K562 (cell line): ENCODE measurements at regions of chr10 and their contacts with region 1.

Region 1: GRCh38 chr10:124719213-124719851 is 24.8 kb downstream of the FAM53B start:
- DNase-seq: peak in 3 of 4 experiments; percentile 24 to 51 (median 48)
- ATAC-seq: peak; percentile 29; the same call in 2 of the 3 replicates
- H3K4me3 ChIP-seq: no peak overlapping the region
- H3K27ac ChIP-seq: no peak overlapping the region
- H3K4me1 ChIP-seq: peaks cover 35 to 48% of the 10 kb centered on the region in 2 experiments
- H3K27me3 ChIP-seq: no peaks in the 10 kb centered on the region
- CTCF ChIP-seq: peak; percentile 25 to 45 (median 41); a peak in 4 of 6 replicates
- EP300 ChIP-seq: no peak
- POLR2A ChIP-seq: no peak
- RAD21 ChIP-seq: peak; percentile 7 to 18; a peak in 1 of 4 replicates

Region 2: GRCh38 chr10:124588736-124589490 is 130.4 kb before region 1 on chr10:
- CTCF ChIA-PET with region 1: no interaction called
- POLR2A ChIA-PET with region 1: interaction called, 4 read pairs
- in situ Hi-C with region 1: no loop called
- intact Hi-C with region 1: loop called (anchors 2 kb)
- DNase-seq: peak; percentile 73 to 87 (median 78)
- ATAC-seq: peak; percentile 95
- H3K4me3 ChIP-seq: no peak overlapping the region
- H3K27ac ChIP-seq: peak overlapping the region; percentile 37; the same call in 2 of the 3 replicates
- H3K4me1 ChIP-seq: peaks cover 15 to 40% of the 10 kb centered on the region in 2 experiments
- H3K27me3 ChIP-seq: peaks cover 0 to 13% of the 10 kb centered on the region in 2 experiments; a peak in 3 of 5 replicates
- CTCF ChIP-seq: no peak
- EP300 ChIP-seq: peak; percentile 78
- POLR2A ChIP-seq: no peak
- RAD21 ChIP-seq: no peak

Region 3: GRCh38 chr10:124647421-124648130 is 71.8 kb before region 1 on chr10:
- CTCF ChIA-PET with region 1: no interaction called
- POLR2A ChIA-PET with region 1: interaction called, 3 read pairs
- in situ Hi-C with region 1: no loop called
- intact Hi-C with region 1: loop called (anchors 1 kb)
- DNase-seq: peak; percentile 60 to 76 (median 66)
- ATAC-seq: peak; percentile 88
- H3K4me3 ChIP-seq: no peak overlapping the region
- H3K27ac ChIP-seq: peak overlapping the region; percentile 82
- H3K4me1 ChIP-seq: peaks cover 35 to 60% of the 10 kb centered on the region in 2 experiments
- H3K27me3 ChIP-seq: no peaks in the 10 kb centered on the region
- CTCF ChIP-seq: peak; percentile 40 to 45 (median 41); a peak in 4 of 6 replicates
- EP300 ChIP-seq: no peak
- POLR2A ChIP-seq: no peak
- RAD21 ChIP-seq: peak in 1 of 2 experiments; percentile 37; a peak in 3 of 4 replicates

Region 4: DNA sequence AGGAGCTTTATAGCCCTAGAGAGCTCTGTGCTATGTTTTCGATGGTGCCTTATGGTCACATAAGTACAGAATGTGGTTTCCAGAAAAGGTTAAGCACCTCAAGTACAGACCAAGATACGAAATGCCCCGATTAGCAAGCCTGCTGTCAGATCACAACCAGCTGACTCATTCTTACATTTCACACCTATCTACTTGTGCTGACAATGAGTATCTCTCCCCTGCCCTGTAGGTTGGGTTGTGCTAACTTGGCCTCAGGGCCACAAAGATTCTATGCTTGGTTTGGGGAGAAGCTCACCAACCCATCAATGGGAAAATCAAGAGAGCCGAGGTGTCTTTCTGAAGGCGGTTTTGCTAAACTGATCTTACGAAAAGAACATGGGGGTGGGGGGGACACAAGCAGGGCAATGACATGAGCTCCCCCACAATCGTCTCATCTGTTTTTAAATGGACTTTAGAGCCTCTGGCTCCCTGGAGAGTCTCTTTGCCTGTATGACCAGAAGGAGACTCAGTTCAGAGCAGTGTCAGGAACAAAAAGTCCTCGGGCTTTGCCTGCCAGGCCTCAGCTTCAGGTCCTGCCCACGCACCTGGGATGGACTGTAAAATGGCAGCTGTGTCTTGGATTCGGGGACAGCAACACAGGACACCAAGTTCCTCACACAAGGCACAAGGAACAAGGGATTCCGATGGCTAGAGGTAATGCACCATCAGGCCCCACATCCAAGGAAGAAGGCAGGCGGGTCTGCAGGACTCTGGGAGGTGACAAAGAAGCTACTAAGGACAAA is 30.3 kb before region 1 on chr10:
- CTCF ChIA-PET with region 1: no interaction called
- POLR2A ChIA-PET with region 1: interaction called, 3 read pairs
- in situ Hi-C with region 1: no loop called
- intact Hi-C with region 1: loop called (anchors 1 kb)
- DNase-seq: peak; percentile 18 to 70 (median 34)
- ATAC-seq: peak; percentile 51
- H3K4me3 ChIP-seq: no peak overlapping the region
- H3K27ac ChIP-seq: peak overlapping the region; percentile 33; the same call in 2 of the 3 replicates
- H3K4me1 ChIP-seq: peaks cover 47 to 48% of the 10 kb centered on the region in 2 experiments
- H3K27me3 ChIP-seq: no peaks in the 10 kb centered on the region
- CTCF ChIP-seq: no peak
- EP300 ChIP-seq: peak; percentile 49; the same call in 1 of the 2 replicates
- POLR2A ChIP-seq: no peak
- RAD21 ChIP-seq: no peak

Region 5: GRCh38 chr10:124701435-124701834 is 17.9 kb before region 1 on chr10:
- CTCF ChIA-PET with region 1: no interaction called
- POLR2A ChIA-PET with region 1: interaction called, 14 read pairs
- in situ Hi-C with region 1: no loop called
- intact Hi-C with region 1: no loop called
- DNase-seq: peak in 1 of 4 experiments; percentile 13
- ATAC-seq: no peak
- H3K4me3 ChIP-seq: no peak overlapping the region
- H3K27ac ChIP-seq: no peak overlapping the region; the same call in 2 of the 3 replicates
- H3K4me1 ChIP-seq: peaks cover 15 to 32% of the 10 kb centered on the region in 2 experiments
- H3K27me3 ChIP-seq: no peaks in the 10 kb centered on the region
- CTCF ChIP-seq: no peak
- EP300 ChIP-seq: no peak
- POLR2A ChIP-seq: no peak
- RAD21 ChIP-seq: no peak

Region 6: GRCh38 chr10:124708922-124709520 is 10.3 kb before region 1 on chr10:
- CTCF ChIA-PET with region 1: no interaction called
- POLR2A ChIA-PET with region 1: interaction called, 12 read pairs
- in situ Hi-C with region 1: no loop called
- intact Hi-C with region 1: no loop called
- DNase-seq: no peak
- ATAC-seq: no peak
- H3K4me3 ChIP-seq: no peak overlapping the region
- H3K27ac ChIP-seq: no peak overlapping the region
- H3K4me1 ChIP-seq: peaks cover 2 to 20% of the 10 kb centered on the region in 2 experiments; a peak in 3 of 5 replicates
- H3K27me3 ChIP-seq: no peaks in the 10 kb centered on the region
- CTCF ChIP-seq: no peak
- EP300 ChIP-seq: no peak
- POLR2A ChIP-seq: no peak
- RAD21 ChIP-seq: no peak

Region 7: DNA sequence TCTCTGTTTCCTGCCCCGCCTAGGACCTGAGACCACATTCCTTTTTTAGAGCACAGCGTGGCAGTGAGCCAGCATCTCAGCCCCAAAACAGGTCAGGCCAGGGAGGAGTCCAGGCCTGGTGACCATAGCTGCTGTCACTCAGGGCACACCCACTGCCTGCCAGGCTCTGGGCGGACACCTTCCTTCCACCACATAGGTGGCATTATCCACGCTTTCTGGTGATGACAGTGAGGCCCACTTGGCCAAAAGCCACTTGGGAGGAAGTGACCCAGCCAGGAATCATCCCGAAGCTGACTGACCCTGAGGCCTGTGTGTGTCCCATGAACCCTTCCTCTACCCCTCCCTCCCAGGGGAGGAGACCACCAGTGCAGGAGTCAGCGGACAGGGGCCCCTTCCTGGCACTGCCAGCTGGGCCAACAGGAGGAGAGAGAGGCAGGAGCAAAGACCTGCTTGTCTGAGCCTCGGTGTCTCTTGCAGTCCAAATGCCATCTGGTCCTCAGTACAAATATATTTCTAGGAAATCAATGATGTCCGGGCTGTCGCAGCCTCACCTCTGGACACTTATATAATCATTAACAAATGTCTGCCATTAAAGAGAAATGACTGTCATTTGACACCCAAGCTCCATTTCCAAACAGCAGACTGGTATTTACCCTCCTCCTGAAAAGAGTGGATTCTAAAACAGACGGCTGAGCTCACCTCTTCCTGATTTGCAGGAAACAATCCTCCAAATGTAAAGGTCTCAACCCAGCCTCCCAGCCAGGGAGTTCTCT is 145.3 kb after region 1 on chr10:
- CTCF ChIA-PET with region 1: no interaction called
- POLR2A ChIA-PET with region 1: no interaction called
- in situ Hi-C with region 1: no loop called
- intact Hi-C with region 1: no loop called
- DNase-seq: peak in 1 of 4 experiments; percentile 6
- ATAC-seq: no peak
- H3K4me3 ChIP-seq: no peak overlapping the region
- H3K27ac ChIP-seq: no peak overlapping the region
- H3K4me1 ChIP-seq: no peaks in the 10 kb centered on the region; a peak in 1 of 5 replicates
- H3K27me3 ChIP-seq: peaks cover 0 to 15% of the 10 kb centered on the region in 2 experiments; a peak in 1 of 5 replicates
- CTCF ChIP-seq: no peak
- EP300 ChIP-seq: no peak
- POLR2A ChIP-seq: no peak
- RAD21 ChIP-seq: no peak